ENCODE measurements at regions of chrX and their contacts with region 1.

Region 1: GRCh38 chrX:130120746-130121504 is 10.6 kb upstream of the ELF4 start:
- DNase-seq: peak; percentile 89
- H3K4me3 ChIP-seq: peak overlapping the region; percentile 16 to 46 (median 38)
- H3K27ac ChIP-seq: peak overlapping the region; percentile 65 to 81 (median 74)
- H3K4me1 ChIP-seq: peaks cover 0 to 48% (median 25%) of the 10 kb centered on the region in 4 donors
- H3K27me3 ChIP-seq: no peaks in the 10 kb centered on the region
- CTCF ChIP-seq: peak; percentile 57 to 66 (median 62)
- EP300 ChIP-seq: no peak
- POLR2A ChIP-seq: no peak

Region 2: GRCh38 chrX:129931411-129932015 is 189.4 kb before region 1 on chrX:
- intact Hi-C with region 1: no loop called
- DNase-seq: peak; percentile 97
- H3K4me3 ChIP-seq: peak overlapping the region; percentile 39 to 58 (median 56)
- H3K27ac ChIP-seq: peak overlapping the region; percentile 85 to 88 (median 86)
- H3K4me1 ChIP-seq: no peaks in the 10 kb centered on the region
- H3K27me3 ChIP-seq: no peaks in the 10 kb centered on the region
- CTCF ChIP-seq: no peak
- EP300 ChIP-seq: no peak
- POLR2A ChIP-seq: peak in 1 of 2 donors; percentile 44

Region 3: GRCh38 chrX:130163350-130163851 is 42.5 kb after region 1 on chrX:
- intact Hi-C with region 1: loop called (anchors 5 kb)
- DNase-seq: no peak
- H3K4me3 ChIP-seq: no peak overlapping the region
- H3K27ac ChIP-seq: no peak overlapping the region
- H3K4me1 ChIP-seq: peaks cover 2 to 16% (median 10%) of the 10 kb centered on the region in 4 donors
- H3K27me3 ChIP-seq: no peaks in the 10 kb centered on the region
- CTCF ChIP-seq: no peak
- EP300 ChIP-seq: no peak
- POLR2A ChIP-seq: no peak

Region 4: DNA sequence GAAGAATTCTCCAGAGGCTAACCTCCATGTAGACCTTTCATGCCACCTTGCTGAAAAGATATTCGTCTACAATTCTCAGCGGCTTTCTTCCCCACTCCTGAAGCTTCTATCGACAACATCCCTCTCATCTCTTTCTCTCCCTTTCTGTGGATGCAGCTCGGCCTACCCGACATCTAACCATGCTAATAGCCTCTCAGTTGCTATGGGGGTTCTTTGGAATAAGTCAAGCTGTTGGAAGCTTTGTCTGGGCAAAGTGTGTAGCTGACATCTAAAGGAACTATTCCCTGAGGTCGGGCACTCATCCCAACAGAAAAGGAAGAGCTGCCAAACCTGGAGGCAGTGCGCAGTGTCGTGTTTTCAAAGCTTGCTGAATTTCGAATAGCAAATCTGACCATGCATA is 473.0 kb after region 1 on chrX:
- intact Hi-C with region 1: no loop called
- DNase-seq: no peak
- H3K4me3 ChIP-seq: no peak overlapping the region
- H3K27ac ChIP-seq: no peak overlapping the region
- H3K4me1 ChIP-seq: no peaks in the 10 kb centered on the region
- H3K27me3 ChIP-seq: no peaks in the 10 kb centered on the region
- CTCF ChIP-seq: no peak
- EP300 ChIP-seq: no peak
- POLR2A ChIP-seq: no peak

Measured in sigmoid colon (tissue), 7 donors.